ENCODE measurements at regions of chrX and their contacts with region 1.

Region 1: DNA sequence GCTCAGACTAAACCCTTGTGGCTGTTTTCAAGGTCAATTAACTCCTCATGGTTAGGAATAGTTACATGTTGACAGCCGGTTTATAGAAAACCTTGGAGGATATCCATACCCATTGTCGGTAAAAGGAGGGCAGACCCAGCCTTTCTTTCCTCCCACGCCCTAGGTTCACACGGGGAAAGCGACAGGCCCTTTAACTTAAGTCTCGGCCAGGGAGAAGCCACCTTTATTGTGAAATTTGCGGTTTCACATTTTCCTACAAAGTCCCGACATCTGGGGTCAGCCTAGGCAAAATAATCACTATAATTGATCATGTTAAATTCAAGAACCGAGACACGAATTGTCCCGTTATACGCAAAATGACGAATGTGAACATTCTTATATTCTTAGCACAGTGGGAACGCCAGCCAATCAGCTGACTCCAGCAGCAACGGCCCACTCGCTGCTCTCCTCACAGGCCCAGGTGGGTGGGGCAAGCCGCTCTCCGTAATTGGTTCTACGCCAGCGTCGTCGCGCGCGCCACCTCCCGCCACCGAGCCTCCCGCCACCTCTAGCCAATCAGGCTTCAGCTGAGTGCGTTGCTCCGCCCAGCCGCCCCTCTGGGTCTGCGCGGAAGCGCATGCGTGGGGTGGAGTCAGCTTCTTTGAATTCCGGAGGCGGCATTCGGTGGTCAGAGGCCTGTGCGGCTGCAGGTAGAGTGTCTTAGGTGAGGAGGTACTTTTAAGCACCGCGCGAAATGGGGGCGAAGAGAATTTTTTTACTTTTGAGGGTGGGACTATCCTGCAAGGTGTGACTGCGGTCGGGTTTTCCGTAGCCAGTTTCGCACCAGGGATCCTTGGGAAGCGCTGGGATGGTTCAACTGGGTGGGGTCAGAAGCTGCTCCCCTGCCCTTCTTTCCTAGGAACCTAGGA is at the start of gene CENPI:
- DNase-seq: peak; percentile 96
- H3K4me3 ChIP-seq: peak within 1 kb of the TSS; percentile 47 to 83 (median 67)
- H3K27ac ChIP-seq: peak within 1 kb of the TSS; percentile 80
- H3K4me1 ChIP-seq: peaks cover 4% of the 10 kb centered on the region
- H3K27me3 ChIP-seq: no peaks in the 10 kb centered on the region
- CTCF ChIP-seq: no peak
- POLR2A ChIP-seq: peak; percentile 79
- total RNA-seq, gene CENPI: 25.7 and 28.9 TPM in 2 replicates

Region 2: DNA sequence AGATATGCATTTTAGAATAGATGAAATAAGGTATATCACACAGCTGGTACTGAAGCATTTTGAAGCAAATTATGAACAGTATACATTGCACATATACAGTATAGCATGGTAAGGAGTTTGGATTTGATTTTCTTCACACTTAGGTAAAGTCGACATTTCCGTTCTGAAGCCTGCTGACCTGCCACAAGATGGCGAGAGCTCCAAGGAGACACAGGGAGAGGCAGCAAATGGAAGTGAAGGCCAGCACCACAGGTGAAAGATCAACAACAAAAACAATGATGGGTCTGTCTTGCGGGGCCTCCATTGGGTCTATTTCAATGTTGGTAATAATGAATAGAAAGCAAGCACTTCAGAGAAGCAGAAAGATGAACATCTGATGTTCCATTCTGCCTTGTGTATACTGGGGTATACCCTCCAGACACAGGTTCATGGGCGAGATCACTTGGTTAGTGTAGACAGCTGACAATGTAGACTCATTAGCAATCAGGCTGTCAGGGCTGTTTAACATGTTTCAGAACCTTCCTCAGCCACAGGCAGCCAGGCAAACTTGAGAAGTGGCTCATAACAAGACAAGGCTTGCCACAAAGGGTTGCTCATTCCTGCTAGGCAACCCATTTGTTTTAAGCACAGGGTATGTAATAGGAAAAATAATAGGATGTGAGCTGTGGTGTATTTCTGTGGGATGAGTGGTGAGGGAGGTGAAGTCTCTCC is 202.3 kb before region 1 on chrX:
- CTCF ChIA-PET with region 1: no interaction called
- POLR2A ChIA-PET with region 1: no interaction called
- dilution Hi-C with region 1: no loop called
- intact Hi-C with region 1: loop called (anchors 1 kb)
- DNase-seq: peak; percentile 26
- H3K4me3 ChIP-seq: no peak overlapping the region
- H3K27ac ChIP-seq: no peak overlapping the region
- H3K4me1 ChIP-seq: no peaks in the 10 kb centered on the region
- H3K27me3 ChIP-seq: no peaks in the 10 kb centered on the region
- CTCF ChIP-seq: peak; percentile 42 to 50
- POLR2A ChIP-seq: no peak

Region 3: GRCh38 chrX:101057093-101057714 is 40.6 kb before region 1 on chrX:
- CTCF ChIA-PET with region 1: interaction called, 3 read pairs
- POLR2A ChIA-PET with region 1: interaction called, 7 read pairs
- dilution Hi-C with region 1: no loop called
- intact Hi-C with region 1: loop called (anchors 1 kb)
- DNase-seq: peak; percentile 88
- H3K4me3 ChIP-seq: no peak overlapping the region
- H3K27ac ChIP-seq: peak overlapping the region; percentile 89
- H3K4me1 ChIP-seq: peaks cover 11% of the 10 kb centered on the region
- H3K27me3 ChIP-seq: no peaks in the 10 kb centered on the region
- CTCF ChIP-seq: no peak
- POLR2A ChIP-seq: no peak

Region 4: GRCh38 chrX:101108284-101108683 is 10.5 kb after region 1 on chrX:
- CTCF ChIA-PET with region 1: no interaction called
- POLR2A ChIA-PET with region 1: interaction called, 12 read pairs
- dilution Hi-C with region 1: no loop called
- intact Hi-C with region 1: no loop called
- DNase-seq: no peak
- H3K4me3 ChIP-seq: no peak overlapping the region
- H3K27ac ChIP-seq: no peak overlapping the region
- H3K4me1 ChIP-seq: no peaks in the 10 kb centered on the region
- H3K27me3 ChIP-seq: no peaks in the 10 kb centered on the region
- CTCF ChIP-seq: no peak
- POLR2A ChIP-seq: no peak

Region 5: DNA sequence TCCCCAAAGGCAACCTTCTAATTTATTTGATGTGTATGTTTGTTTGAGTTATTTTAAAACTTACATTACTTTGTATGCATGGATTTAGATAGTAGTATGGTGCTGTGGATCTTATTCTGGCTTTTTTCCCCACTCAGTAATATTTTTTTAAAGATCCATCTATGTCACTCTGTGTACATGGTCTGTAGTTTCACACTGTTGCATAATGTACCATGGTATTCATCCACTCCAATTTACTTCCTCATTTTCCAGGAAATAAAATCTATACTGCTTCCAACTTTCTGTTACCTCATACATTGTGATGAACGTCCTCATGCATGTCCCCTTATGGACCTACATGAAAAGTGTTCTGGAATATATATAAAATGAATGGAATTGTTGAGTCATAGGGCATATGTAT is 544.3 kb after region 1 on chrX:
- CTCF ChIA-PET with region 1: no interaction called
- POLR2A ChIA-PET with region 1: no interaction called
- dilution Hi-C with region 1: no loop called
- intact Hi-C with region 1: no loop called
- DNase-seq: no peak
- H3K4me3 ChIP-seq: no peak overlapping the region
- H3K27ac ChIP-seq: no peak overlapping the region
- H3K4me1 ChIP-seq: no peaks in the 10 kb centered on the region
- H3K27me3 ChIP-seq: no peaks in the 10 kb centered on the region
- CTCF ChIP-seq: no peak
- POLR2A ChIP-seq: no peak